GM18951 (cell line): ENCODE measurements at regions of chr1 and their contacts with region 1.

Region 1: DNA sequence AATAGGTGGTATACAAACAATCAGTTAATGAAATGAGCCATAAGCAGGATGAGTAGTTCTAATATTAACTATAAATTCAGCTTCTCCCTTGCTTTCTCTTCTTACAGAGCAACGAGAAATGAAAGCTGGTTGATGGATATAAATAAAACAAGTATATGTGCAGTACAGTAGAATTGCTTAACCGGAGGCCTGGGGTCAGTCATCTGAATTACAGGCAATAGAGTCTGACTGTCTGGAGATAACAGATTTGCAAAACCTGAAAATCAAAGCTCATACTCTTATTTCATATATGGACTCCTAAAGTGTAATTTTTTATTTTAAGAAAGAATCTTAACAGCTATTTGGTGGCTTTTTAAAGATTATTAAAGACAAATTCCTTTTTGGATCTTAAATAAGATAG is 43.1 kb upstream of the SGIP1 start:
- POLR2A ChIP-seq: no peak

Region 2: DNA sequence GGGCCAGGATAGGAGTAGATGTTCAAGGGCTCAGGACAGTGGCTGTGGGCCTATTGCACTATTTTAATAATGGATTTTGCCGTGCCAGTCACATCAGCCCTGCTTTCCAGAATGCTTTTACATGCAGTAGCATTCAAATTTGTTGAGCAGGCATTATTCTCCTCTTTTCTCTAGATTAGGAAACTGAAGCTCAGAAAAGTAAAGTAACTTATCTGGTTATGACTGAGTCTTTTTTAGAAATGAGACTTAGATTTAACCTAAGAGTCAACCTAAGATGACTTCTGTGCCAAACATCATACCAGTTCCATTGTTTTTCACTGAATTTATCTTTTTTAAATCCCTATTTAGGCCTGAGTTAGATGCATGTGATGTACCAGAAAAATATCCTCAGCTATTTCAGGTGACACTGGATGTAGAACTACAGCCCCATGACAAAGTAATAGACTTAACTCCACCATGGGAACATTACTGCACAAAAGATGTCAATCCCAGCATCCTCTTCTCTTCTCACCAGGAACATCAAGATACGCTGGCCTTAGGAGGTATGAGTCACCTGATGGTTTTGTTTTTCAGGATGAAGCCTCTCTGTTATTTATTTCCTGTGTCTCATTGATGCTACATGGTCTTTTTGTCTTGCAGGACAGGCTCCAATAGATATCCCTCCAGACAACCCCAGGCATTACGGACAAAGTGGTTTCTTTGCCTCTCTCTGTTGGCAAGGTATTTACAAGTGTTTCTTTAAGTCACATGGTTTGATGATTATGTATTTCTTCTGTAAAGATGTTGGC is 1101.7 kb before region 1 on chr1:
- in situ Hi-C with region 1: loop called (anchors 10 kb)
- POLR2A ChIP-seq: no peak

Region 3: GRCh38 chr1:66446261-66447001 is 44.4 kb before region 1 on chr1:
- in situ Hi-C with region 1: no loop called
- POLR2A ChIP-seq: no peak